ENCODE measurements at regions of chr17 and their contacts with region 1.

Region 1: DNA sequence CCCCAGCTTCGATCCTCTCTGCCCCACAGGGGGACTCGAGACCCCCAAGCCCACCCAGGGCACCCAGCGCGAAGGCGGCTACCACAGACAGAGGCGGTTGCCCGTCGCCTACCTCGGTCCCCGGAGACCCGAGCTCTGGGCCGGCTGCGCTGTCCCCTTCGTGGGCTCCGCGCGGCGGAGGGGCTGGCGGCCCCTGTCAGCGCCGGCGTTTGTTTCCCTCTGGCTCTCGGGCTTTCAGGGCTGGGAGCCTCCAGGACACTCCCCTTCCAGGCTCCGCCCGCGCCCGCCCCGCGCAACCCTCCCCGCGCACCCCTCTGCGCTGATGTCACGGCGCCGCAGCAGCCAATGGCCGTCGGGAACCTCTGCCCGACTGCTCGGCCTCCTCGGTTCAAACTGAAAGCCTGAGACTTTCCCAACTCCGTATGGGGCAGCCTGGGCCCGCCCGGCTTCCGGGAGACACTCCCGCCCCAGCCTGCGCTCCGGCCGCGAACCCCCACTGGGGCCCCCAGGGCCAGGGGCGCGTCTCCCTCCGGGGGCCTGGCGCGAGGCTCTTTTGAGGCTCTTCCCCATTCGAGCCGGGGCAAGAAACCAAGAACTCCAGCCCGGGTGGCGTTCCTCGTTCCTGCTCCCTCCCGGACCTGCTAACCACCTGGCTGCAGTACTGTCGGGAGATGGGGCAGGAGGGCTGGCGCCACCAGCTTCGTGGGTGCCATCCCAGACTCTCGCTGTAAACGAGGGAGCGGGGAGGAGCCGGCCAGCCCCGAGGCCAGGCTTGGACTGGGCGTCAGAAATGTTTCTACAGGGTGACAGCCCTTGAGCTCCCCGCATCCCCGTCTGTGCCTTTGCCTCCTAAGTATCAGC is at the start of gene CDC42EP4:
- DNase-seq: peak; percentile 96 to 97
- ATAC-seq: peak; percentile 91 to 95 (median 94)
- H3K4me3 ChIP-seq: peak within 1 kb of the TSS; percentile 85
- H3K27ac ChIP-seq: peak within 1 kb of the TSS; percentile 87
- H3K4me1 ChIP-seq: peaks cover 10% of the 10 kb centered on the region
- H3K27me3 ChIP-seq: no peaks in the 10 kb centered on the region
- CTCF ChIP-seq: no peak
- total RNA-seq, gene CDC42EP4: 13.7 to 24.4 (median 18.1) TPM

Region 2: DNA sequence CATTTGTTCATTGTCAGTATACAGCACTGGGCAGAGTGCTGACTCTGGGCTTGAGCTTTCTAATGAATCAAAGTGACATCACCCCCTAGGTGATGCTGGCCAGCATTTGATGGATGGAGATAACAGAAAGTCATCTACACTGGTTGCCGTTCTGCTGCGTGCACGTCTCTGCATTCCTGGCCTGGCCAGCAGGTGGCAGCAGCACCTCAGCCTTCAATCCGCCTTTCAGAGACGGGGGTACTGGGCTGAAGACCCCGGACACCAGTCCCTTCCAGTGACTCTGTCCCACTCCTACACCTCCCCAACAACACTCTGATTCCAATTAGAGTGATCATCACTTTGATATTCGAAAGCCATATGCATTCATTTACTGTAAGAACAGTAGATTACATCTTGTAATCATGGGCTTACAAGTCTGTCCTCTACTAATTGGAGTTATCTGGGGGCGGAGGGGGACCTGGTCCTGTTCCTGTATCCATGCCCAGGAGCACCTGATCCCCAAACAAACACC is 56.3 kb before region 1 on chr17:
- intact Hi-C with region 1: loop called in 1 of 2 experiments (anchors 5 kb)
- DNase-seq: peak; percentile 45 to 72
- ATAC-seq: peak; percentile 66 to 88 (median 80)
- H3K4me3 ChIP-seq: no peak overlapping the region
- H3K27ac ChIP-seq: no peak overlapping the region
- H3K4me1 ChIP-seq: no peaks in the 10 kb centered on the region
- H3K27me3 ChIP-seq: no peaks in the 10 kb centered on the region
- CTCF ChIP-seq: peak; percentile 99

Region 3: DNA sequence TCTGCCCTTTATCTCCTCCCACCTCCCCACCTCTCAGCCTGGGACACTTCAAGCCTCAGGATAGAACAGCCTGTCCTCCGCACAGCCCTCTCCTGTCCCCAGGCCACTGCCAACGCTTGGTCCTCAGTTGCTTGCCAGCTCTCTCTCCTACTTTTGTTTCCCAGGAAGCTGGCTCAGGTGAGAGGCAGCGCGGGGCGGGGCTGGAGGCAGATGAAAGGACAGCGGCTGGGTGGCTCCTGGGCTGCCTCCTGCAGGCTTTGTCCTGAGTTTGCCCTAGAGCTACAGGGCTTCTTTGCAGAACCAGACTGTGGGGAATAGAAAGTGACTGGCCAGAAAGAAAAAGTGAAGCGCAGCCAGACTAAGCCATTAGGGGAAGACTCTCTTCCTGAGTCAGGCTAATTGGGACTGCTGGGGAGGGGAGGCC is 48.0 kb after region 1 on chr17:
- intact Hi-C with region 1: loop called in 1 of 2 experiments (anchors 5 kb)
- DNase-seq: no peak
- ATAC-seq: peak; percentile 32 to 75 (median 58)
- H3K4me3 ChIP-seq: no peak overlapping the region
- H3K27ac ChIP-seq: no peak overlapping the region
- H3K4me1 ChIP-seq: no peaks in the 10 kb centered on the region
- H3K27me3 ChIP-seq: peaks cover 0 to 4% (median 0%) of the 10 kb centered on the region in 3 donors
- CTCF ChIP-seq: no peak

Region 4: DNA sequence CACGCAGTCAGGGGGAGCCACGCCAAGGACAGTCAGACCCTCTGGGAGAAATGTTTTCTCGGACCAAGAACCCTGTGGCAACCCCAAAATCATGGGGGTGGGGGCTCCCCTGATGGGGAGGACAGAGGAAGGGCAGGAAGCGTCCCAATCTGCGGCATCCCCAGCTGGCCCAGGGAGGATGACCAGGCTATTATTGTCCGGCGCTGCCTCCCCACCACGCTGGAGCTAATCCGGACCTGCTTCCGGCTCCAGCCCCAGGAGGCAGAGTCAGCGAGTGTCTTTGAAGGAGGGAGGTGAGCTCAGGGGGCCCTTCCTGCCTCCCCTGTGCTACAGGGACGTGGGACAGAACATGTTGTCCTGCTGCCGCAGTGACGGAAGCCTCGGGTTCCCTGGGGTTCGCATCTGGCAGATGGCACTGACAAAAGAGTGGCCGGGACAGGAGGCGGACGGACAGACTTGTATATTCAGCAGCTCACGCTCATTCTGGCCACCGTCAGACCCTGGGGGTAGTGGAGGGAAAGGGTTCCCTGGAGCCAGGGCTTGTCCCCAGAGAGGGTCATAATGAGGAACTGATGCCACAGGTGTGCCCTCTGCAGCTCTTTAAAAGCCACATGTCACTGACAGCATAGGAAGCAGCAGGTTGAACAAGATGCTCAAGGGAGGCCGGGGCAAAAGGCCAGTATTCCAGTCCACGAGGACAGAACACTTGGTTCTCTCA is 54.1 kb after region 1 on chr17:
- intact Hi-C with region 1: loop called in 1 of 2 experiments (anchors 2 kb)
- DNase-seq: peak; percentile 65 to 88
- ATAC-seq: peak; percentile 20 to 73 (median 52)
- H3K4me3 ChIP-seq: no peak overlapping the region
- H3K27ac ChIP-seq: peak overlapping the region; percentile 55
- H3K4me1 ChIP-seq: no peaks in the 10 kb centered on the region
- H3K27me3 ChIP-seq: peaks cover 0 to 7% (median 2%) of the 10 kb centered on the region in 3 donors
- CTCF ChIP-seq: no peak